Activated naive CD4-positive, alpha-beta T cell treated with anti-CD3 and anti-CD28 coated beads for 36 hours (primary cell): ENCODE measurements at regions of chr14 and their contacts with region 1.

Region 1: DNA sequence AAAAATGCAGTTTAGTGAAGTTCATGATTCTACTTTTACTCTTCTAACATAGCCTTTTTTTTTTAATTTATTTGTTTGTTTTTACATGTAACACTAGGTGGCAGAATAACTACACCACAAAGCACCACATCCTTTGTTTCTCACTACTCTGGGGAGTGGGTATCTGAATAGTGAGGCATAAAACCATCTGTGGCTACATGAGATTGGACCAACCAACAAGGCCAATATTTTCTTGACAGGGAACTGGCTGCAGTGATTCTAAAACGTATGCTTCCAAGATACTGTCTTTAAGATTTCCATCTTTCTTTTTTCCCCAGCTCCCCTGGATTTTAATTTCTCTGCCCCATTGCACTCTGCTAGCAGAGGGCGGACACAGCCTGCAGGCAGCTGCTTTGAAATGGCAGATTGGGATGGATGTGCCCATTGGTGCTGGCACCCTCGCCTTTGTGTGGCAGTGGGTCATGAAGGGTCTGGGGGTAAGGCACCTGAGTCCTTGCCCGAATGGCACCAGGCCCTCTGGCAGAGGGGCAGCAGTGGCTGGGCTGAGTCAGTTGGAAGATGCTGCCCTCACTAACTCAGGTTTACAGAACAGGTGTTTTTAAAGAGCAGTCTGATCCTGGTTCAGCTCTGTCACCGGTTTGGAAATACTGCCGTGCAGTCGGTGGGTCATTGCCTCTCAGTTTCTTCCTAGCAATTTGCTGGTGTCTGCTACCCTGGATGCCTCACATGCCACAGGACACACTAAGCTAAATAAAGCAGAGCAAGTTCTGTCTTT is 429.1 kb downstream of the RAD51B start:
- DNase-seq: no peak
- H3K4me3 Mint-ChIP-seq: no peak overlapping the region
- H3K27ac Mint-ChIP-seq: no peak overlapping the region
- H3K4me1 Mint-ChIP-seq: peaks cover 41% of the 10 kb centered on the region
- H3K27me3 Mint-ChIP-seq: no peaks in the 10 kb centered on the region

Region 2: GRCh38 chr14:67943947-67944346 is 304.7 kb before region 1 on chr14:
- CTCF ChIA-PET with region 1: interaction called, 10 read pairs
- intact Hi-C with region 1: no loop called
- DNase-seq: peak; percentile 65
- H3K4me3 Mint-ChIP-seq: no peak overlapping the region
- H3K27ac Mint-ChIP-seq: no peak overlapping the region
- H3K4me1 Mint-ChIP-seq: no peaks in the 10 kb centered on the region
- H3K27me3 Mint-ChIP-seq: no peaks in the 10 kb centered on the region

Region 3: GRCh38 chr14:68210729-68211299 is 37.9 kb before region 1 on chr14:
- CTCF ChIA-PET with region 1: no interaction called
- intact Hi-C with region 1: no loop called
- DNase-seq: peak; percentile 74
- H3K4me3 Mint-ChIP-seq: peak overlapping the region; percentile 11
- H3K27ac Mint-ChIP-seq: peak overlapping the region; percentile 57
- H3K4me1 Mint-ChIP-seq: peaks cover 48% of the 10 kb centered on the region
- H3K27me3 Mint-ChIP-seq: no peaks in the 10 kb centered on the region

Region 4: DNA sequence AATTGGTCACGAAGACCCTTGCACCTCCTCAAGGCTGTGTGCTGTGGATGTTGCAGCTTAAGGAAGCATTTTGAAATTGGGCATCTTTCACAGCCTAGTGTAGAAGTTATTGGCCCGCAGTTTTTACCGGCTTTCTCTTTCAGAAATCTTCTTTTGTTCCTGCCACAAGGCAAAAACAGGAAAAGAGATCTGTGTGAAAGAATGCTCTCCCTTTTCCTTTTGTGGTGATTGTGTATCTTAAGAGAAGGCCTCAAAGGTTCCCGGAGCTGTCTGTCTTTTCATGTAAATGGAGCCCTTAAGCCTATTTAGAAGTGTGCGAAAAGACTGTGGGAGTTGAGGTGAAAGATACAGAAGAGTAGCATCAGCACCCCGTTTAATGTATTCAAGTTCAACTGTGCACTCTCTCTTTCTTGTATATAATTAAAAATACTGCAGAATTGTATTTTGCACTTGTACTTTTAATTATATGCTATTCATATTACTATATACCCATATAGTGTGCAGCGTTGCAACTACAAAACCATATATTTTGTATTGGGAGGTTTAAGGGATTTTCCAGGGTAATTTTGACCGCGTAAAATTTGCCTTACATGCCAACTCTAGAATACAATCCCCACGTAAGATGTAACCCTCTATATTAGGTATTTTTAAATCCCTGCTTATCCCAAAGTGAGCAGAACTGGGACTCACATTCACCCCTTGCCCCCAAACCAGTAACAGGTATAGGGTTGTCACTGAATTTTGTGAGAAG is 12.6 kb after region 1 on chr14:
- CTCF ChIA-PET with region 1: interaction called, 4 read pairs
- intact Hi-C with region 1: loop called (anchors 1 kb)
- DNase-seq: no peak
- H3K4me3 Mint-ChIP-seq: no peak overlapping the region
- H3K27ac Mint-ChIP-seq: no peak overlapping the region
- H3K4me1 Mint-ChIP-seq: peaks cover 60% of the 10 kb centered on the region
- H3K27me3 Mint-ChIP-seq: no peaks in the 10 kb centered on the region

Region 5: GRCh38 chr14:68408680-68409079 is 160.0 kb after region 1 on chr14:
- CTCF ChIA-PET with region 1: interaction called, 3 read pairs
- intact Hi-C with region 1: loop called (anchors 1 kb)
- DNase-seq: peak; percentile 34
- H3K4me3 Mint-ChIP-seq: no peak overlapping the region
- H3K27ac Mint-ChIP-seq: no peak overlapping the region
- H3K4me1 Mint-ChIP-seq: peaks cover 25% of the 10 kb centered on the region
- H3K27me3 Mint-ChIP-seq: no peaks in the 10 kb centered on the region

Region 6: GRCh38 chr14:68718023-68718995 is 469.6 kb after region 1 on chr14:
- CTCF ChIA-PET with region 1: no interaction called
- intact Hi-C with region 1: loop called (anchors 1 kb)
- DNase-seq: peak; percentile 34
- H3K4me3 Mint-ChIP-seq: no peak overlapping the region
- H3K27ac Mint-ChIP-seq: no peak overlapping the region
- H3K4me1 Mint-ChIP-seq: peaks cover 32% of the 10 kb centered on the region
- H3K27me3 Mint-ChIP-seq: no peaks in the 10 kb centered on the region

Region 7: DNA sequence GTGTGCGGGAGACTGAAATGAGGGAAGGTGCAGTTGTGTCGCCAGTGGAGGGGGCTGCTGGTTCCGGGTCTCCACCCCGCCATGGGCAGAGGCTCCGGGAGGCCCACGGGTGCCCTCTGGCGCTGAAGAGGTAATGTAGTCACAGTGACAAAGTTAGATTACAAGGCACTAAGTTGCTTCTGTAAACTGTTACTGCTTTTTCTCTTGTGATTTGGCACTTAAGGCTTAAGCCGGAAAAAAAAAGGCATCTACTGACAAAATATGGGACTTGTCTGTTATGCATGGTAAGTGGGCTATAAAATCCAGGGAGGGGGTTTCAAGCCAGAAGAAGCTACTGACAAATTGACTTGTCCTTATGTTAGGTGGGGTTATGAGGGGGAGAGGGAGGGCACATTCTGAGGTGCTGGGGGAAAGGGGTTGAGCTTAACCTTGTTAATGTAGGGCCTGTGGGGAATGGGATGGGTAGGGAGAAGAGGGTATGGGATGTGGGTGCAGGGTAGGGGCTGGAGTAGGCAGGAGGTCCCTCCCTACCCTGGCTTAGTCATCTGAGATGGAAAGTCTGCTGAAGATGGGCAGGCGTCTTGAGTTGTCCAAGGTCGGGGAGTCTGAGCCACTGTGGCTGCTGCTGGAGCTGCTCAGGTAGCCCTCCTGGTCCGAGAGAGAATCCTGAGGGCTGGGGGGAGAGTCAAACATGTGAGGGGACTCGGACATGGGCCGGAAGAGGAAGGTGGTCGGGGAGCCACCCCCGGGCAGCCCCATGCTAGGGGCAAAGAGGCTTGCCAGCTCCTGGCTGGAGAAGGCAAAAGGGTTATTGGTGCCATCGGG is 540.5 kb after region 1 on chr14:
- CTCF ChIA-PET with region 1: interaction called, 32 read pairs
- intact Hi-C with region 1: loop called (anchors 1 kb)
- DNase-seq: peak; percentile 91
- H3K4me3 Mint-ChIP-seq: peak overlapping the region; percentile 90
- H3K27ac Mint-ChIP-seq: peak overlapping the region; percentile 100
- H3K4me1 Mint-ChIP-seq: peaks cover 55% of the 10 kb centered on the region
- H3K27me3 Mint-ChIP-seq: no peaks in the 10 kb centered on the region